SK-N-SH (cell line): ENCODE measurements at regions of chr7 and their contacts with region 1.

Region 1: GRCh38 chr7:30276203-30276900 is 8.0 kb upstream of the ZNRF2 start:
- DNase-seq: peak; percentile 67
- H3K4me3 ChIP-seq: no peak overlapping the region
- H3K27ac ChIP-seq: no peak overlapping the region
- H3K4me1 ChIP-seq: no peaks in the 10 kb centered on the region
- H3K27me3 ChIP-seq: no peaks in the 10 kb centered on the region
- CTCF ChIP-seq: peak; percentile 89
- EP300 ChIP-seq: no peak
- RAD21 ChIP-seq: peak; percentile 98

Region 2: DNA sequence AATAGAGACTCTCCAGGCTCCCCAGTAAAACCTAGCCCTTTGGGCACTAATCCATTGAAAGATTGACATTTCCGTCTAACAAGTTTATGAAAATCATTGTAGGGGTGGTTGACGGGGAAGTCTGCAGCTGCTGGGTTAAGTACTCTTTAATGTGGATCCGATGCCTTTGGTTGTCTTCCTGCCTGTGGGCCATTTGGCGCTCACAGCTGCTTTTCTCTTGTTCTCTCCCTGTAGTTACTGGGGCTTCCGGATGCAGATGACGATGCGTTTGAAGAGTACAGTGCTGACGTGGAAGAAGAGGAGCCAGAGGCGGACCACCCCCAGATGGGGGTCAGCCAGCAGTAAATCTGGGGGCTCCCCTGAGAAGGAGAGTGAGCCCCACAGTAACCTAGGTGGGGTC is 119.1 kb before region 1 on chr7:
- CTCF ChIA-PET with region 1: interaction called, 10 read pairs
- POLR2A ChIA-PET with region 1: no interaction called
- DNase-seq: no peak
- H3K4me3 ChIP-seq: no peak overlapping the region
- H3K27ac ChIP-seq: no peak overlapping the region
- H3K4me1 ChIP-seq: peaks cover 2 to 3% of the 10 kb centered on the region in 2 experiments; a peak in 2 of 4 replicates
- H3K27me3 ChIP-seq: no peaks in the 10 kb centered on the region
- CTCF ChIP-seq: no peak
- EP300 ChIP-seq: no peak
- RAD21 ChIP-seq: no peak

Region 3: GRCh38 chr7:30252885-30253795 is 23.2 kb before region 1 on chr7:
- CTCF ChIA-PET with region 1: interaction called, 12 read pairs
- POLR2A ChIA-PET with region 1: no interaction called
- DNase-seq: no peak
- H3K4me3 ChIP-seq: no peak overlapping the region
- H3K27ac ChIP-seq: peak overlapping the region in 1 of 2 experiments; percentile 54; a peak in 1 of 4 replicates
- H3K4me1 ChIP-seq: peaks cover 0 to 9% of the 10 kb centered on the region in 2 experiments; a peak in 1 of 4 replicates
- H3K27me3 ChIP-seq: no peaks in the 10 kb centered on the region
- CTCF ChIP-seq: no peak
- EP300 ChIP-seq: no peak; a peak in 1 of 4 replicates
- RAD21 ChIP-seq: no peak

Region 4: GRCh38 chr7:30352169-30352568 is 75.8 kb after region 1 on chr7:
- CTCF ChIA-PET with region 1: interaction called, 15 read pairs
- POLR2A ChIA-PET with region 1: no interaction called
- DNase-seq: no peak
- H3K4me3 ChIP-seq: no peak overlapping the region
- H3K27ac ChIP-seq: peak overlapping the region in 1 of 2 experiments; percentile 39; a peak in 1 of 4 replicates
- H3K4me1 ChIP-seq: peaks cover 9 to 32% of the 10 kb centered on the region in 2 experiments; a peak in 2 of 4 replicates
- H3K27me3 ChIP-seq: no peaks in the 10 kb centered on the region
- CTCF ChIP-seq: peak; percentile 35
- EP300 ChIP-seq: no peak
- RAD21 ChIP-seq: peak; percentile 35; the same call in 1 of the 2 replicates

Region 5: GRCh38 chr7:30469303-30469702 is 193.0 kb after region 1 on chr7:
- CTCF ChIA-PET with region 1: interaction called, 13 read pairs
- POLR2A ChIA-PET with region 1: no interaction called
- DNase-seq: no peak
- H3K4me3 ChIP-seq: 0 out of 4 replicates have a peak overlapping the region, but pooled peaks of 1 of the 2 experiments have one; percentile 3
- H3K27ac ChIP-seq: peak overlapping the region; percentile 81 to 98
- H3K4me1 ChIP-seq: peaks cover 14 to 83% of the 10 kb centered on the region in 2 experiments
- H3K27me3 ChIP-seq: no peaks in the 10 kb centered on the region
- CTCF ChIP-seq: peak; percentile 61
- EP300 ChIP-seq: no peak; a peak in 1 of 4 replicates
- RAD21 ChIP-seq: peak; percentile 49

Region 6: DNA sequence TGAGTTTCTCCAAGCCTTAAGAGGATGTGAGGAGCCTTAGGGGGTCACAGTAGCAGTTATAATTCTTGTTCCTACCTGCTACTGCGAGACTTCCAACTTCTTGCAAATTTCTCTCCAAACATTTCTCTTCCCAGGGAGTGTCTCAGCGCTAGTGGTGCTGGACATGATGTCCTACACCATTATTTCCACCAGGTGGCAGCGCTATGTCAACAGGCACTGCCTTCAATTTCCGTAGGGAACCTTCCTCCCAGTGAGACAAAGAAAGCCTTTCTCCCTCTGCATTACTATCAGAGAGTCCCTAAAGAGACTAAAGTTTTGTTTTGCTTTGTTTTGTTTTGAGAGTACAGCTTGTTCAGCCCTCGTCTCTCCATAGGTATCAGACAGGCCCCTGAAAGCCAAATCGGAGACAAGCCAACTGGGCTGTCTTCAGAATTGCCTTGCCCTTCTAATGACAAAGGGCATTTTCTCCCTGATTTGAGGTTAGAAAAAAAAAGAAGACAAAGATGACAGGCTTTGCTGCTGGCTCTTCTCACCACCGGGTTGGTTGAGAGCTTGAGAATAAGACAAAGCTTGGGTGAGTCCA is 272.5 kb after region 1 on chr7:
- CTCF ChIA-PET with region 1: interaction called, 18 read pairs
- POLR2A ChIA-PET with region 1: no interaction called
- DNase-seq: peak; percentile 77
- H3K4me3 ChIP-seq: peak overlapping the region in 1 of 2 experiments; percentile 1; a peak in 1 of 4 replicates
- H3K27ac ChIP-seq: peak overlapping the region in 1 of 2 experiments; percentile 35; a peak in 1 of 4 replicates
- H3K4me1 ChIP-seq: peaks cover 5 to 18% of the 10 kb centered on the region in 2 experiments; a peak in 3 of 4 replicates
- H3K27me3 ChIP-seq: no peaks in the 10 kb centered on the region
- CTCF ChIP-seq: peak; percentile 96
- EP300 ChIP-seq: no peak
- RAD21 ChIP-seq: peak; percentile 79